ENCODE measurements at regions of chr20 and their contacts with region 1.

Region 1: GRCh38 chr20:53939572-53940359 is 130.6 kb downstream of the BCAS1 start:
- DNase-seq: peak; percentile 52 to 81
- ATAC-seq: peak; percentile 73 to 81 (median 75)
- H3K4me3 ChIP-seq: no peak overlapping the region
- H3K4me3 Mint-ChIP-seq: no peak overlapping the region
- H3K27ac ChIP-seq: no peak overlapping the region
- H3K27ac Mint-ChIP-seq: peak overlapping the region in 1 of 2 donors; percentile 36
- H3K4me1 ChIP-seq: peaks cover 39% of the 10 kb centered on the region
- H3K4me1 Mint-ChIP-seq: peaks cover 35 to 50% of the 10 kb centered on the region in 2 donors
- H3K27me3 ChIP-seq: no peaks in the 10 kb centered on the region
- H3K27me3 Mint-ChIP-seq: peaks cover 0 to 5% of the 10 kb centered on the region in 2 donors
- CTCF ChIP-seq: peak; percentile 65

Region 2: DNA sequence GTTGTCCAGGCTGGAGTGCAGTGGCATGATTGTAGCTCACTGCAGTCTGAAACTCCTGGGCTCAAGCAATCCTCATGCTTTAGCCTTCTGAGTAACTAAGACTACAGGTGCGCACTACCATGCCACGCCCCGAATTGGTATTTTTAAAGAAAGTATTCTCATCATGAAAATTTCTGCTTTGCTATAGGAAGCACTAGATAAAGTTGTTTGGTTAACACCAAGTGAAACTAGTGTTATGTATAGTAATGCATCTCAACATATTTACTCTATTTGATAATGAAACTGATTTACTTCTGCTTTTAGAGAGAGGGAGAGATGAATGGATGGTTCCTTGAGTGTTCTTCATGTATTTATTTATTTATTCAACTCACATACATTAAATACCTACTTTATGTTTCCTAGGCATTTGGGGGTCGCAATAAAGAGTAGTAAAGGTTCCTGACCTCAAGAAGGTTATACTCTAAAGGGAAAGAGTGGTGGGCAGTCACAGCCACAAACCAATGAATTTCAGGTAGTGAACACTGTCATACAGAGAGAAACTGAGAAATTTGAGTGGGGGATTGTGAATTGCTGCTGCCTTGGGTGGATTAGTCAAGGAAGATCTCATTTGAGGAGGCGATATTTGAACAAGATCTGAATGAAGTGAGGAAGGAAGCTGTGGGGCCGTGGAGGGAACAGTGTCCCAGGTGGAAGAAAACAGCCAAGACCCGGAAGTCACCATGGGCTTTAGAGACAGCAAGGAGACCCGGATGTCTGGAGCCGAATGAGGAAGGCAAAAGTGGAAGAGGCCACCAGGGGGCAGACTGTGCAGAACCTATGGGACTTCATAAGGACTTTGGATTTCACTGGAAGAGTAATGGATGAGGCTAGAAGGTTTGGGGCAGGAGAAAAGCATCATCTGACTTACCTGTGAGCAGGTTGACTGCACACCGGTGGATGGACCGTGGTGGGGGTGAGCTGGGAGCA is 782.0 kb before region 1 on chr20:
- intact Hi-C with region 1: loop called (anchors 5 kb)
- DNase-seq: peak; percentile 27 to 61
- ATAC-seq: peak in 1 of 3 donors; percentile 44
- H3K4me3 ChIP-seq: no peak overlapping the region
- H3K4me3 Mint-ChIP-seq: no peak overlapping the region
- H3K27ac ChIP-seq: no peak overlapping the region
- H3K27ac Mint-ChIP-seq: no peak overlapping the region
- H3K4me1 ChIP-seq: no peaks in the 10 kb centered on the region
- H3K4me1 Mint-ChIP-seq: no peaks in the 10 kb centered on the region
- H3K27me3 ChIP-seq: no peaks in the 10 kb centered on the region
- H3K27me3 Mint-ChIP-seq: peaks cover 12 to 34% of the 10 kb centered on the region in 2 donors
- CTCF ChIP-seq: peak; percentile 57

Region 3: DNA sequence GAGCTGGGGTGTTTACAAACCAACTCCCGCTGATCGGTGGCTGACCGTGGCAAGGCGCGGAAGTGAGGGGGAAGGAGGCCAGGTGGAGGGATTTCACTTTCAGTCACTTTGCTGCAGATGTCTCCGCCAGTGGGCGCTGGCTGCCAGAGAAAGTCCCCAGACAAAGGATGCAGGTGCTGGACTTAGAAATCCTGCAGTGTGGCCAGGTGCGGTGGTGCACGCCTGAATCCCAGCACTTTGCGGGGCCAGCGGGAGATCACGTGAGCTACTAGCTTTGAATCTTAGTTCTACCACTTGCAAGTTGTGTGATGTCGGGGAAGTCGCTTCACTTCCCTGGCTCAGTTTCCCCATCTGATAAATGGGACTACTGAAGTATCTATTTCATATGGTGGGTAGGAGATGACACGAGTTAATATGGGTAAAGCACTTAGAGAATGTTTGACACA is 526.6 kb before region 1 on chr20:
- intact Hi-C with region 1: loop called (anchors 5 kb)
- DNase-seq: peak; percentile 23 to 67
- ATAC-seq: peak in 1 of 3 donors; percentile 58
- H3K4me3 ChIP-seq: no peak overlapping the region
- H3K4me3 Mint-ChIP-seq: no peak overlapping the region
- H3K27ac ChIP-seq: no peak overlapping the region
- H3K27ac Mint-ChIP-seq: no peak overlapping the region
- H3K4me1 ChIP-seq: peaks cover 6% of the 10 kb centered on the region
- H3K4me1 Mint-ChIP-seq: peaks cover 0 to 6% of the 10 kb centered on the region in 2 donors
- H3K27me3 ChIP-seq: no peaks in the 10 kb centered on the region
- H3K27me3 Mint-ChIP-seq: peaks cover 2 to 4% of the 10 kb centered on the region in 2 donors
- CTCF ChIP-seq: peak; percentile 42

Region 4: GRCh38 chr20:53839423-53840176 is 100.2 kb before region 1 on chr20:
- intact Hi-C with region 1: loop called (anchors 5 kb)
- DNase-seq: peak; percentile 61 to 85
- ATAC-seq: peak; percentile 51 to 82 (median 74)
- H3K4me3 ChIP-seq: no peak overlapping the region
- H3K4me3 Mint-ChIP-seq: peak overlapping the region; percentile 96
- H3K27ac ChIP-seq: peak overlapping the region; percentile 69
- H3K27ac Mint-ChIP-seq: peak overlapping the region; percentile 84 to 89
- H3K4me1 ChIP-seq: peaks cover 84% of the 10 kb centered on the region
- H3K4me1 Mint-ChIP-seq: peaks cover 72% of the 10 kb centered on the region in 2 donors
- H3K27me3 ChIP-seq: no peaks in the 10 kb centered on the region
- H3K27me3 Mint-ChIP-seq: no peaks in the 10 kb centered on the region
- CTCF ChIP-seq: no peak

Region 5: GRCh38 chr20:54093423-54094267 is 153.9 kb after region 1 on chr20:
- intact Hi-C with region 1: no loop called
- DNase-seq: no peak
- ATAC-seq: no peak
- H3K4me3 ChIP-seq: no peak overlapping the region
- H3K4me3 Mint-ChIP-seq: no peak overlapping the region
- H3K27ac ChIP-seq: no peak overlapping the region
- H3K27ac Mint-ChIP-seq: no peak overlapping the region
- H3K4me1 ChIP-seq: no peaks in the 10 kb centered on the region
- H3K4me1 Mint-ChIP-seq: peaks cover 14% of the 10 kb centered on the region in 2 donors
- H3K27me3 ChIP-seq: no peaks in the 10 kb centered on the region
- H3K27me3 Mint-ChIP-seq: no peaks in the 10 kb centered on the region
- CTCF ChIP-seq: no peak